ENCODE measurements at regions of chr17 and their contacts with region 1.

Region 1: GRCh38 chr17:75087558-75088453 is at the start of gene SLC16A5:
- DNase-seq: peak; percentile 29 to 73 (median 51)
- ATAC-seq: peak; percentile 73
- H3K4me3 ChIP-seq: peak within 1 kb of the TSS; percentile 60
- H3K4me3 Mint-ChIP-seq: peak within 1 kb of the TSS; percentile 58 to 90 (median 84)
- H3K27ac ChIP-seq: peak within 1 kb of the TSS; percentile 79
- H3K27ac Mint-ChIP-seq: peak within 1 kb of the TSS; percentile 77 to 94 (median 91)
- H3K4me1 ChIP-seq: peaks cover 6 to 29% of the 10 kb centered on the region in 2 donors
- H3K4me1 Mint-ChIP-seq: peaks cover 51 to 74% (median 58%) of the 10 kb centered on the region in 7 donors
- H3K27me3 ChIP-seq: no peaks in the 10 kb centered on the region
- H3K27me3 Mint-ChIP-seq: no peaks in the 10 kb centered on the region
- total RNA-seq, gene SLC16A5: 9.2 to 26.3 (median 24.5) TPM

Region 2: GRCh38 chr17:75046582-75047289 is 41.1 kb before region 1 on chr17 and contains the starts of genes ATP5PD and KCTD2:
- CTCF ChIA-PET with region 1: no interaction called
- POLR2A ChIA-PET with region 1: interaction called, 7 read pairs
- intact Hi-C with region 1: loop called in 1 of 2 experiments (anchors 5 kb)
- DNase-seq: peak; percentile 82 to 93 (median 91)
- ATAC-seq: peak; percentile 98
- H3K4me3 ChIP-seq: peak within 1 kb of the TSS; percentile 77
- H3K4me3 Mint-ChIP-seq: peak within 1 kb of the TSS; percentile 95 to 99 (median 98)
- H3K27ac ChIP-seq: peak within 1 kb of the TSS; percentile 93
- H3K27ac Mint-ChIP-seq: peak within 1 kb of the TSS; percentile 92 to 99 (median 96)
- H3K4me1 ChIP-seq: peaks cover 13 to 16% of the 10 kb centered on the region in 2 donors
- H3K4me1 Mint-ChIP-seq: peaks cover 30 to 62% (median 49%) of the 10 kb centered on the region in 7 donors
- H3K27me3 ChIP-seq: no peaks in the 10 kb centered on the region
- H3K27me3 Mint-ChIP-seq: no peaks in the 10 kb centered on the region
- total RNA-seq, gene ATP5PD: 113 to 195 (median 161) TPM
- total RNA-seq, gene KCTD2: 19.5 to 35.7 (median 23.0) TPM

Region 3: GRCh38 chr17:75069783-75070182 is 18.0 kb before region 1 on chr17:
- CTCF ChIA-PET with region 1: interaction called, 4 read pairs
- POLR2A ChIA-PET with region 1: interaction called, 20 read pairs
- intact Hi-C with region 1: no loop called
- DNase-seq: peak in 1 of 9 donors; percentile 40
- ATAC-seq: peak; percentile 47
- H3K4me3 ChIP-seq: no peak overlapping the region
- H3K4me3 Mint-ChIP-seq: peak overlapping the region in 1 of 10 donors; percentile 54
- H3K27ac ChIP-seq: no peak overlapping the region
- H3K27ac Mint-ChIP-seq: peak overlapping the region in 7 of 9 donors; percentile 14 to 75 (median 42)
- H3K4me1 ChIP-seq: peaks cover 7 to 9% of the 10 kb centered on the region in 2 donors
- H3K4me1 Mint-ChIP-seq: peaks cover 13 to 36% (median 28%) of the 10 kb centered on the region in 7 donors
- H3K27me3 ChIP-seq: no peaks in the 10 kb centered on the region
- H3K27me3 Mint-ChIP-seq: no peaks in the 10 kb centered on the region

Measured in naive thymus-derived CD4-positive, alpha-beta T cell (primary cell).